Endothelial cell of umbilical vein (primary cell): ENCODE measurements at regions of chr17 and their contacts with region 1.

Region 1: GRCh38 chr17:74379495-74380085 is 12.3 kb downstream of the GPR142 start:
- DNase-seq: peak; percentile 64
- H3K4me3 ChIP-seq: no peak overlapping the region
- H3K27ac ChIP-seq: no peak overlapping the region
- H3K4me1 ChIP-seq: no peaks in the 10 kb centered on the region
- H3K27me3 ChIP-seq: no peaks in the 10 kb centered on the region
- CTCF ChIP-seq: peak; percentile 75 to 92
- POLR2A ChIP-seq: no peak

Region 2: GRCh38 chr17:74288785-74289184 is 90.8 kb before region 1 on chr17:
- CTCF ChIA-PET with region 1: no interaction called
- POLR2A ChIA-PET with region 1: no interaction called
- dilution Hi-C with region 1: no loop called
- intact Hi-C with region 1: no loop called
- DNase-seq: no peak
- H3K4me3 ChIP-seq: no peak overlapping the region
- H3K27ac ChIP-seq: no peak overlapping the region
- H3K4me1 ChIP-seq: no peaks in the 10 kb centered on the region
- H3K27me3 ChIP-seq: no peaks in the 10 kb centered on the region
- CTCF ChIP-seq: no peak
- POLR2A ChIP-seq: no peak

Region 3: GRCh38 chr17:74361230-74362068 is 18.1 kb before region 1 on chr17 and contains the start of gene BTBD17:
- CTCF ChIA-PET with region 1: interaction called, 20 read pairs
- POLR2A ChIA-PET with region 1: no interaction called
- dilution Hi-C with region 1: no loop called
- intact Hi-C with region 1: no loop called
- DNase-seq: peak; percentile 13
- H3K4me3 ChIP-seq: no peak within 1 kb of the TSS
- H3K27ac ChIP-seq: no peak within 1 kb of the TSS
- H3K4me1 ChIP-seq: no peaks in the 10 kb centered on the region
- H3K27me3 ChIP-seq: peaks cover 7 to 12% of the 10 kb centered on the region in 2 experiments
- CTCF ChIP-seq: peak; percentile 67 to 76
- POLR2A ChIP-seq: no peak
- total RNA-seq, gene BTBD17: not detected in 2 replicates

Region 4: GRCh38 chr17:74394977-74395376 is 15.4 kb after region 1 on chr17:
- CTCF ChIA-PET with region 1: interaction called, 32 read pairs
- POLR2A ChIA-PET with region 1: no interaction called
- dilution Hi-C with region 1: no loop called
- intact Hi-C with region 1: no loop called
- DNase-seq: no peak
- H3K4me3 ChIP-seq: no peak overlapping the region
- H3K27ac ChIP-seq: no peak overlapping the region
- H3K4me1 ChIP-seq: no peaks in the 10 kb centered on the region
- H3K27me3 ChIP-seq: no peaks in the 10 kb centered on the region
- CTCF ChIP-seq: no peak
- POLR2A ChIP-seq: no peak

Region 5: GRCh38 chr17:74457146-74457819 is 77.7 kb after region 1 on chr17:
- CTCF ChIA-PET with region 1: interaction called, 221 read pairs
- POLR2A ChIA-PET with region 1: no interaction called
- dilution Hi-C with region 1: no loop called
- intact Hi-C with region 1: loop called (anchors 1 kb)
- DNase-seq: peak; percentile 44
- H3K4me3 ChIP-seq: no peak overlapping the region
- H3K27ac ChIP-seq: no peak overlapping the region
- H3K4me1 ChIP-seq: peaks cover 3% of the 10 kb centered on the region
- H3K27me3 ChIP-seq: no peaks in the 10 kb centered on the region
- CTCF ChIP-seq: peak; percentile 88 to 89
- POLR2A ChIP-seq: no peak

Region 6: GRCh38 chr17:74493381-74493833 is 113.8 kb after region 1 on chr17:
- CTCF ChIA-PET with region 1: interaction called, 8 read pairs
- POLR2A ChIA-PET with region 1: no interaction called
- dilution Hi-C with region 1: no loop called
- intact Hi-C with region 1: loop called (anchors 1 kb)
- DNase-seq: peak; percentile 38
- H3K4me3 ChIP-seq: no peak overlapping the region
- H3K27ac ChIP-seq: no peak overlapping the region
- H3K4me1 ChIP-seq: no peaks in the 10 kb centered on the region
- H3K27me3 ChIP-seq: no peaks in the 10 kb centered on the region
- CTCF ChIP-seq: peak; percentile 72 to 73
- POLR2A ChIP-seq: no peak

Region 7: GRCh38 chr17:74601944-74602572 is 222.5 kb after region 1 on chr17:
- CTCF ChIA-PET with region 1: interaction called, 11 read pairs
- POLR2A ChIA-PET with region 1: no interaction called
- dilution Hi-C with region 1: no loop called
- intact Hi-C with region 1: no loop called
- DNase-seq: peak; percentile 5
- H3K4me3 ChIP-seq: no peak overlapping the region
- H3K27ac ChIP-seq: no peak overlapping the region
- H3K4me1 ChIP-seq: no peaks in the 10 kb centered on the region
- H3K27me3 ChIP-seq: no peaks in the 10 kb centered on the region
- CTCF ChIP-seq: peak; percentile 37 to 42
- POLR2A ChIP-seq: no peak

Region 8: DNA sequence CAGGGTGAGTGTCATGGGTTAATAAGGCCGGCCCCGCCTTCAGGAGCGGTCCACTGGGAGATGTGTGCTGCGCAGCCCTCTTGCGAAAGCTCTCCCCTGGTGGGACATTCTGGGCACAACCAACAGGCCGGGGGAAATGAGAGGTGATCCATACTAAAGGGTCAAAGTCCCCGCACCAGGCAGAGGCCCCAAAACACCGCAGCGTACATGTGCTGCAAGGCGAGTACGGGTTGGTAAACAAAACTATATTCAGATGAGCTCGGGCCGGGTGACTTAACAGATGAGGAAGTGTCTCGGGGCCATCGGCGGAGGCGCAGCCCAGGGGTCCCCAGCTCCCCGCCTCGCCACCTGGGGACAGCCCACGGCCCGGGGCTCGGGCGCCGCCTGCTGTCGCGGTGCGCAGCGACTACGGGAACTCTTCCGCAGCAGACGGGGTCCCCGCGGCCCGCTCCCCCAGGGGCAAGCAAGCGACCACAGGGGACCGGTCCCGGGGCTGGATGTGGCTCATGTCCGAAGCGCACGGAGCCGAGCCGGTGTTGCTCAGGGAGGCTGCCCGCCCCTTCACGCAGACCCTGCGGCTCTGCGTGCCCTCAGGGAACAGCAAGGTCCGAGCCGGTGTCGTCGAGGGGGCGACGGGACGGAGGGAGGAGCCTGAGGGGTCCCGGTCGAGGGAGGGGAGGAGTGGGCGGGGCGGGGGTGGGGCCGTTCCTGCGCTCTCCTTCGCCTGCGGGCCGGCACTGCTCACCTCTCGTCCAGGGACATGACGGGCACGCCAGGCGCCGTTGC is 357.1 kb after region 1 on chr17 and contains the start of gene RAB37:
- CTCF ChIA-PET with region 1: interaction called, 15 read pairs
- POLR2A ChIA-PET with region 1: no interaction called
- dilution Hi-C with region 1: no loop called
- intact Hi-C with region 1: no loop called
- DNase-seq: no peak
- H3K4me3 ChIP-seq: no peak within 1 kb of the TSS
- H3K27ac ChIP-seq: no peak within 1 kb of the TSS
- H3K4me1 ChIP-seq: no peaks in the 10 kb centered on the region
- H3K27me3 ChIP-seq: peaks cover 29 to 39% of the 10 kb centered on the region in 2 experiments
- CTCF ChIP-seq: peak in 1 of 2 donors; percentile 41
- POLR2A ChIP-seq: no peak
- total RNA-seq, gene RAB37: 0.21 TPM in 1 of 2 replicates, not detected in the other